AG04449 (cell line): ENCODE measurements at regions of chr10 and their contacts with region 1.

Region 1: DNA sequence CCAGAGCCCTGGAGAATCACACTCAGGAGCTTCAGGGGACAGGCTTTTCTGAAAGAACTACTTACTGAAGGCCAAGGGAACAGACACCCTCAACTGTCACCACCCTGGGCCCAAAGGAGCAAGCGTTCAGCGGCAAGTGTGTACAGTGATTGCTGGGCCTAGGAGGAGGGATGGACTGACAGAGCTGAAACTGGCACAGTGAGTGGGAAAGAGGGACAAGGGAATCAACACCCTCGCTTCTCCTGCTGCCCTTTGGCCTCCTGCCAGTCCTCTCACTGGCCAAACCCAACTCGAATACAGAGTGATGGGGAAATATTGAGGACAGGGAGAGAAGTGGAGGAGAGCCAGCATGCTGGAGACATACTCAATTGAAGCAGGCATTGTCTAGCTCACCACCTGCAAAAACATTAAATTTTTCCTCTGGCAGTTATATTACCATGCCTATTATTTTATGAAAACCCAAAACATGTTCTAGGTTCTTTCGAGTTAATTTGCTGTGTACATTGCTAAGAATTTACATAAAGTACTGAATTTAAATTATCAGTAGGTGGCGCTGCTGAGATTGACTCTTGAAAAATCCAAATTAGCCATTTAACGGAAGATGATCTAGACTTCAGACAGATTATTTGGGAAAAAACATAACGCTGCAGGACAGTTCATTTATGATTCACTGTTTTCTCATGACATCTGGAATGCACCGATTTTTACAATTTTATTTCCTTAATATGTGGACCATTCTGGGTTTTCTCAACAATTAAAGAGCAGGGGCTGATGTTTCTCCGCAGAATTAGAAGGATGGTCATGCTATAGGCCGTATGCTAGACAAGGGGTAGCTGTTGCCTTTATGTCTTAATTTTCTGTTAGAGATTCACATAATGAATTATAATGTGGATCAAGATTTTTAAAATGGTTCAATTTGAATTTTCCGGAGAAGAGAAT is 14.7 kb upstream of the TMEM236 start:
- DNase-seq: no peak
- H3K4me3 ChIP-seq: no peak overlapping the region
- CTCF ChIP-seq: peak; percentile 26

Region 2: GRCh38 chr10:17687117-17687831 is 50.0 kb before region 1 on chr10:
- CTCF ChIA-PET with region 1: interaction called, 11 read pairs
- POLR2A ChIA-PET with region 1: no interaction called
- DNase-seq: no peak
- H3K4me3 ChIP-seq: no peak overlapping the region
- CTCF ChIP-seq: no peak

Region 3: GRCh38 chr10:17747883-17748550 is 10.7 kb after region 1 on chr10:
- CTCF ChIA-PET with region 1: interaction called, 17 read pairs
- POLR2A ChIA-PET with region 1: no interaction called
- DNase-seq: no peak
- H3K4me3 ChIP-seq: no peak overlapping the region
- CTCF ChIP-seq: no peak

Region 4: GRCh38 chr10:17766731-17767130 is 29.4 kb after region 1 on chr10:
- CTCF ChIA-PET with region 1: interaction called, 10 read pairs
- POLR2A ChIA-PET with region 1: no interaction called
- DNase-seq: no peak
- H3K4me3 ChIP-seq: no peak overlapping the region
- CTCF ChIP-seq: no peak

Region 5: GRCh38 chr10:18214691-18215563 is 477.6 kb after region 1 on chr10:
- CTCF ChIA-PET with region 1: interaction called, 13 read pairs
- POLR2A ChIA-PET with region 1: no interaction called
- DNase-seq: no peak
- H3K4me3 ChIP-seq: no peak overlapping the region
- CTCF ChIP-seq: peak; percentile 78